Endothelial cell of umbilical vein (primary cell): ENCODE measurements at regions of chr4 and their contacts with region 1.

Region 1: DNA sequence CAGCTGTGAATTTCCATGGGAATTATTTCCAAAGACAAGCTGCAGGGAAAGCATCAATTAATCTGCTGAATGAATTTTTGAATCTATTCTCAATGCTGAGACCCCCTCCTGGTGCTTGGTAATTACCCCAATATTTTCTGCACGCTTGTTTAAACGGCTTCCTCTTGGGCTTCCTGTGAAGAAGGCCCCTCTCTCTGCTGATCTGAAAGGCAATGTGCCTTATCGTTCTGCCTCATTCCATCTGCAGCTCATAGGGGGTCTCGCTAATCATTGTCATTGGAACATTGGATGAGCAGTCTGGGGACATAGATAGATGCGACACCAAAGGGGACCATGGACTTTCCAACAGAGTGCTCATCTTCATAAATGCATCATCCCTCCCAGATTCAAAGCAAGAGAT is 851.6 kb downstream of the PDHA2 start:
- DNase-seq: no peak
- H3K4me3 ChIP-seq: no peak overlapping the region
- H3K27ac ChIP-seq: no peak overlapping the region
- H3K4me1 ChIP-seq: no peaks in the 10 kb centered on the region
- H3K27me3 ChIP-seq: no peaks in the 10 kb centered on the region
- CTCF ChIP-seq: no peak
- POLR2A ChIP-seq: no peak

Region 2: GRCh38 chr4:95651891-95652290 is 1039.6 kb before region 1 on chr4:
- CTCF ChIA-PET with region 1: no interaction called
- POLR2A ChIA-PET with region 1: interaction called, 15 read pairs
- dilution Hi-C with region 1: no loop called
- intact Hi-C with region 1: no loop called
- DNase-seq: no peak
- H3K4me3 ChIP-seq: no peak overlapping the region
- H3K27ac ChIP-seq: no peak overlapping the region
- H3K4me1 ChIP-seq: peaks cover 2% of the 10 kb centered on the region
- H3K27me3 ChIP-seq: no peaks in the 10 kb centered on the region
- CTCF ChIP-seq: no peak
- POLR2A ChIP-seq: no peak

Region 3: DNA sequence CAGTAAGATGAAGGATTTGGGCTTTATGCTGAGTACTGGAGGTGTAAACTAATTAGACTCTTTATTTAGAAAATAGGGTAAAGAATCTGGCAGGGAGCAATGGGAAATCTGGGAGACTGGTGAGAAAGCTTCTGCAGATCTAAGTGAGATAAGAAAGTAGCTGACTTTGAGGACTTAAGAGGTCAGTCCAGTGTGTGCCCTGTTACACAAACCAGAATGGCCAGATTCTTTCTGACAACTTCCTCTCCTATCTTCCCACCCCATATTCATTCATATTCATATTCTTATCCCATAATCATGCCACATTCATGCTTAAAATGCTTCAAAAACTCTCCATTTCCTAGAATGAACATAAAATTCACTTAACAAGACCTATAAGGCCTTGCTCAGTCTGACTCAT is 482.9 kb after region 1 on chr4:
- CTCF ChIA-PET with region 1: no interaction called
- POLR2A ChIA-PET with region 1: no interaction called
- dilution Hi-C with region 1: no loop called
- intact Hi-C with region 1: no loop called
- DNase-seq: no peak
- H3K4me3 ChIP-seq: no peak overlapping the region
- H3K27ac ChIP-seq: no peak overlapping the region
- H3K4me1 ChIP-seq: no peaks in the 10 kb centered on the region
- H3K27me3 ChIP-seq: no peaks in the 10 kb centered on the region
- CTCF ChIP-seq: no peak
- POLR2A ChIP-seq: no peak